ENCODE measurements at regions of chrX and their contacts with region 1.

Region 1: GRCh38 chrX:24426391-24426790 is 38.7 kb upstream of the PDK3 start:
- DNase-seq: peak; percentile 88
- H3K4me3 ChIP-seq: no peak overlapping the region
- H3K27ac ChIP-seq: peak overlapping the region; percentile 36
- H3K4me1 ChIP-seq: peaks cover 16% of the 10 kb centered on the region
- H3K27me3 ChIP-seq: peaks cover 3% of the 10 kb centered on the region
- CTCF ChIP-seq: no peak

Region 2: GRCh38 chrX:24464836-24465531 is 38.6 kb after region 1 on chrX and contains the start of gene PDK3:
- CTCF ChIA-PET with region 1: no interaction called
- dilution Hi-C with region 1: no loop called
- in situ Hi-C with region 1: no loop called
- intact Hi-C with region 1: loop called (anchors 5 kb)
- DNase-seq: peak; percentile 83
- H3K4me3 ChIP-seq: peak within 1 kb of the TSS; percentile 60 to 66 (median 62)
- H3K27ac ChIP-seq: peak within 1 kb of the TSS; percentile 68
- H3K4me1 ChIP-seq: peaks cover 4% of the 10 kb centered on the region
- H3K27me3 ChIP-seq: no peaks in the 10 kb centered on the region
- CTCF ChIP-seq: no peak
- total RNA-seq, gene PDK3: 1.2 to 6.0 TPM